Mammary epithelial cell (primary cell): ENCODE measurements at regions of chr19 and their contacts with region 1.

Region 1: DNA sequence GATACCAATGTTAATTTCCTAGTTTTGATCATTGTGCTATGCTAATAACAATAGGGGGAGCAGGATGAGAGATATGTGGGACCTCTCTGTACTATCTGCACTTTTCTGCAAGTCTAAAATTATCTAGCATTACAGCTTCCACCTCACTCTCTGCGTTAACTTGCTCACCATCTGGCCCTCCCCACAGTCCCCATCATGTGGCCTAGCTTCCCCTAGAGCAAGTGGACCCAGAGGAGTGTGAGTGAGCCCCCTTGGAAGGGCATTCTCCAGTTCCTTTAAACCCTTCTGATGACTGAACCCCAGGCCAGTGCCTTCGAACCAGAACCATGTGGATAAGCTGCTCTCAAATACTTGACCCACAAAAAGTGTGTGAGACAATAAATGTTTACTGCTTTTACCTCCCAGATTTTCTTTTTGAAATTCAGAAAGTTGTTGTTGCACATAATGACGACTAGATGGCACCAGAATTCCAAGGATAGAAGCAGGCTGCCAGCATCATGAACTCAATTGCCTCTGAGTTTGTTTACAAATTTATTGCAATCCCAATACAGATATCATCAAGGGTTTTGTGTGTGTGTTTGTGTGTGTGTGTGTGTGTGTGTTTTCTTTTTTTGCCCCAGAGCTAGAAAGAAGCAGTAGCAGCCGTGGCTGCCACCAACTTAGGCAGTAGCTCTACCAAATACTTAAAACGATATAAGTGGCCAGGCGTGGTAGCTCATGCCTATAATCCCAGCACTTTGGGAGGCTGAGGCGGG is 49.0 kb upstream of the ZNF780A start:
- DNase-seq: peak; percentile 23
- H3K4me3 ChIP-seq: no peak overlapping the region
- H3K27ac ChIP-seq: no peak overlapping the region
- H3K4me1 ChIP-seq: no peaks in the 10 kb centered on the region
- H3K27me3 ChIP-seq: no peaks in the 10 kb centered on the region
- CTCF ChIP-seq: peak; percentile 59 to 75

Region 2: DNA sequence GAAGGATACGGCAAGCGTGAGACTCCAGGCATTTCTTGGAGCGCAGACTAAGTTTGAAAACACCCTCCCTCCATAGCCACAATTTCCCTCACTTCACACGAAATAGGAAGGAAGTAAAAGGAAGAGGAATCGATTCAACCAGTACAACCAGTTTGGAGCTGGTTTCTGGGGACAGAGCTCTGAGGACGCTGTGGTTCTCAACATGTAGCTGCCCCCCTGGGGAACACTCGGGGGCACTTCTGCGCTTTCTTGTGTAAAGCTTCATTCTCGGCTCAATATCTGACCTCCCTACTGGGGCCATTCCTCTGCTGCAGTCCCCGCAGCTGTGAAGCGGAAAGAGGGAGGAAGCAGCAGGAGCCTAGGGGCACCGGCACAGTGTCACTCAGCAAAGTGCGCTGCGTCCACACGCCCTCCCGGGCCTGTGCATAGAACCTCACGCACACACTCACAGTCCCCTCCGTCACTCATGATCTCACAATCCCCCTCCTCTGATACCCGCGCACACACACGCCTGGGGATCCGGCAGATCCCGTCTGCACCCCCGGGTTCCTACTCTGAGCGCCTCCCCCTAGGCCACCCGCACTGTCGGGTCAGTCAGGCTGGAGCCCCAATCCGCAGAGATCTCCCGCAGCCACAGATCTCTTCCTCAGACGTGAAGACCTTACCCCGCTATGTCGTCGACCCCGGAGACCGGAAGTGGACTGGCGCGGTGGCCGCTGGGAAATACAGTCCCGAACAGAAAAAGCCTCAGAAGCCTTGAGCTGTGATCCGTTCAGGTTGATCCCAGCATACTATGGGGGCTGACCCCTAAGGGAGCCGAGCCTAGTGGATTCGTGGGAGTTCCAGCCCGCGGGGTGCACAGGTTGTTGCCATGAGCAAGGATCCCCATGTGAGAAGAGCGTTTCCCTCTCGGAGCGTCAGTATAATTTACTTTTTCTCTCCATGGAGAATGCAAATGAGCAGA is 49.2 kb before region 1 on chr19 and contains the start of gene ZNF780A:
- CTCF ChIA-PET with region 1: interaction called, 3 read pairs
- dilution Hi-C with region 1: loop called (anchors 5 kb)
- in situ Hi-C with region 1: no loop called
- intact Hi-C with region 1: no loop called
- DNase-seq: peak; percentile 51
- H3K4me3 ChIP-seq: peak within 1 kb of the TSS; percentile 66 to 86 (median 72)
- H3K27ac ChIP-seq: peak within 1 kb of the TSS; percentile 46
- H3K4me1 ChIP-seq: peaks cover 3% of the 10 kb centered on the region
- H3K27me3 ChIP-seq: no peaks in the 10 kb centered on the region
- CTCF ChIP-seq: no peak
- total RNA-seq, gene ZNF780A: 11.7 to 14.8 TPM

Region 3: DNA sequence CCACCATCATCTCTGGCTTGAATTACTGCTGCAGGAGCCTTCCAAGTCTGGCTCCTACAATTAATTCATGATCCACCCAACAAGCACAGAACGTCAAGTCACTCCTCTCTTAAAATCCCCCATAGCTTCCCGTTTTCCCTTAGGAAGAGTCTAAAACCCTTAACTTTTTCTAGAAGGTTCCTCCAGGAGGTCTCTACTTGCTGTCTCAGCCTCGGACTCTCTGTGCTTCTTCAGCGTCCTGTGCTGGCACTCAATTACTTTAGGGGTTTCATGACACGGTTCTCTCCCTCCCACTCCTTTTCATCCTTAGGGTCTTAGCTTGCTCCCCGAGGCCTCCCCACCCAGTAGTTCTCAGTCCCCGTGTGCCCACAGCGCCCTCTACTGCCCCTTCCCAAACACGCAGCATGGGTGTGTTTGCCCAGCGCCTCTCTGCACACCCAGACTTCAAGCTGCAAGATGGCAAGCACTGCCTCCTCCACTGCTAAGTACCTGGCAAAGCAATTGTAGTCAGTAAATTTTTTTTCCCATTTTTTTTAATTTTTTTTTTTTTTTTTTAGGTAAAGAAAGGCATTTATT is 25.7 kb after region 1 on chr19:
- CTCF ChIA-PET with region 1: no interaction called
- dilution Hi-C with region 1: no loop called
- in situ Hi-C with region 1: no loop called
- intact Hi-C with region 1: no loop called
- DNase-seq: no peak
- H3K4me3 ChIP-seq: no peak overlapping the region
- H3K27ac ChIP-seq: no peak overlapping the region
- H3K4me1 ChIP-seq: no peaks in the 10 kb centered on the region
- H3K27me3 ChIP-seq: no peaks in the 10 kb centered on the region
- CTCF ChIP-seq: peak; percentile 62 to 77

Region 4: GRCh38 chr19:40221858-40222837 is 82.4 kb after region 1 on chr19:
- CTCF ChIA-PET with region 1: no interaction called
- dilution Hi-C with region 1: loop called (anchors 5 kb)
- in situ Hi-C with region 1: loop called in 1 of 2 experiments (anchors 5 kb)
- intact Hi-C with region 1: loop called (anchors 1 kb)
- DNase-seq: peak; percentile 78
- H3K4me3 ChIP-seq: no peak overlapping the region
- H3K27ac ChIP-seq: no peak overlapping the region
- H3K4me1 ChIP-seq: peaks cover 26% of the 10 kb centered on the region
- H3K27me3 ChIP-seq: no peaks in the 10 kb centered on the region
- CTCF ChIP-seq: peak; percentile 75 to 85

Region 5: DNA sequence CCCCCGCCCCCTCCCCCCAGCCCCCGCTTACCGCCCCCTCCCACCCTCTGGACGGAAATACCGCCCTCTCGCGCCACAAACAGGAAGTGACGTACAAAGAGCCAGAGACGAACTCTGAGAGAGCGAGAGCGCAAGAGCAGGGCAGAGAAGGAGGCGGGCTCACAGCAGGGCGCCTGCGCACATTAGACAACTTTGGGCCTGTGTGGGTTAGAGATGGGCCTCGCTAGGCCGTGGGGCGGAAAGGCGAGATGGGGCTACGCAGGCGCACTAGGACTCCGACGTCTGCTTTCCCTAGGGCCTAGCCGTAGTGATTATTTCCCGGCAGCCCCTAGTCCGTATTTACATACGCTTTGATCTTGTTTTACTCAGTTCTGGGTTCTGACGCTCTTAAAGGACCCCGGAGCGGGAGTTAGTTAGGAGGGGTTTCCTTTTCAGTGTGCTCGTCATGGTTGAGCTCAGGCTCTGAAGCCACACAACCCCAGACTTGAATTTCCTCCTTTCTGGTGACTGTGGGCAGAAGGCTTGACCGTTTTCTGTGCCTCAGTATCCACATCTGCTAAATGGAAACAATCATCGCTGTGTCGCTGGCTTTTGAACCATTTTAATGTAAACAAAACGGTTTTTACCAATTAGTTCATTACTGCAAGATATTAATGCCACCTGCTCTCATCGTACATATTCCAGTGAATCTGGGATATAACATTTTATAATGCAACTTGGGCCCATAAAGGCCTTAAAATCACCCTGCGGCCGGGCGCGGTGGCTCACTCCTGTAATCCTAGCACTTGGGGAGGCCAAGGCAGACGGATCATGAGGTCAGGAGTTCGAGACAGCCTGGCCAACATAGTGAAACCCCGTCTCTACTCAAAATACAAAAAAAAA is 145.9 kb after region 1 on chr19:
- CTCF ChIA-PET with region 1: no interaction called
- dilution Hi-C with region 1: no loop called
- in situ Hi-C with region 1: no loop called
- intact Hi-C with region 1: no loop called
- DNase-seq: peak; percentile 99
- H3K4me3 ChIP-seq: peak overlapping the region; percentile 23 to 93 (median 60)
- H3K27ac ChIP-seq: peak overlapping the region; percentile 76
- H3K4me1 ChIP-seq: peaks cover 21% of the 10 kb centered on the region
- H3K27me3 ChIP-seq: no peaks in the 10 kb centered on the region
- CTCF ChIP-seq: no peak

Region 6: GRCh38 chr19:40529093-40529954 is 389.6 kb after region 1 on chr19:
- CTCF ChIA-PET with region 1: no interaction called
- dilution Hi-C with region 1: no loop called
- in situ Hi-C with region 1: no loop called
- intact Hi-C with region 1: loop called (anchors 5 kb)
- DNase-seq: peak; percentile 64
- H3K4me3 ChIP-seq: peak overlapping the region; percentile 28 to 29 (median 29)
- H3K27ac ChIP-seq: no peak overlapping the region
- H3K4me1 ChIP-seq: peaks cover 3% of the 10 kb centered on the region
- H3K27me3 ChIP-seq: no peaks in the 10 kb centered on the region
- CTCF ChIP-seq: peak; percentile 72 to 96

Region 7: GRCh38 chr19:40633207-40633606 is 493.5 kb after region 1 on chr19:
- CTCF ChIA-PET with region 1: no interaction called
- dilution Hi-C with region 1: no loop called
- in situ Hi-C with region 1: no loop called
- intact Hi-C with region 1: loop called (anchors 5 kb)
- DNase-seq: no peak
- H3K4me3 ChIP-seq: no peak overlapping the region
- H3K27ac ChIP-seq: no peak overlapping the region
- H3K4me1 ChIP-seq: no peaks in the 10 kb centered on the region
- H3K27me3 ChIP-seq: no peaks in the 10 kb centered on the region
- CTCF ChIP-seq: no peak

Region 8: DNA sequence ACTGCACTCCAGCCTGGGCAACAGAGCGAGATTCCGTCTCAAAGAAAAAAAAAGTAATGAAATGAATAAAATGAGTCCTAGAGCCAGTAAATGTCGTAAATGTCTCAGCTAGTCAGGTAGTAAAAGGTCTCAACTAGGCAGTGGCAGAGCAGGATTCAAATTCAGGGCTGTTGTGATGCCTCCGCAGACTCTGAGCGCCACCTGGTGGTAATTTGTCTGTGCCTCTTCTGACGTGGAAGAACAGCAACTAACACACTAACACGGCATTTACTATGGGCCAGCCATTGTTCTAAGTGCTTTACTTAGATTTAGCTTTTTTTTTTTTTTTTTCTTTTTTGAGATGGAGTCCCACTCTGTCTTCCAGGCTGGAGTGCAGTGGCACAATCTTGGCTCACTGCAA is 1004.7 kb after region 1 on chr19:
- CTCF ChIA-PET with region 1: no interaction called
- dilution Hi-C with region 1: no loop called
- in situ Hi-C with region 1: no loop called
- intact Hi-C with region 1: loop called (anchors 10 kb)
- DNase-seq: peak; percentile 62
- H3K4me3 ChIP-seq: no peak overlapping the region
- H3K27ac ChIP-seq: no peak overlapping the region
- H3K4me1 ChIP-seq: no peaks in the 10 kb centered on the region
- H3K27me3 ChIP-seq: no peaks in the 10 kb centered on the region
- CTCF ChIP-seq: peak; percentile 83 to 86